ENCODE measurements at regions of chr21 and their contacts with region 1.

Region 1: GRCh38 chr21:45309069-45309986 is 21.6 kb upstream of the POFUT2 start:
- DNase-seq: peak; percentile 89
- H3K4me3 ChIP-seq: no peak overlapping the region
- H3K27ac ChIP-seq: peak overlapping the region; percentile 84
- H3K4me1 ChIP-seq: peaks cover 18% of the 10 kb centered on the region
- H3K27me3 ChIP-seq: no peaks in the 10 kb centered on the region
- CTCF ChIP-seq: peak; percentile 76 to 93
- POLR2A ChIP-seq: no peak

Region 2: DNA sequence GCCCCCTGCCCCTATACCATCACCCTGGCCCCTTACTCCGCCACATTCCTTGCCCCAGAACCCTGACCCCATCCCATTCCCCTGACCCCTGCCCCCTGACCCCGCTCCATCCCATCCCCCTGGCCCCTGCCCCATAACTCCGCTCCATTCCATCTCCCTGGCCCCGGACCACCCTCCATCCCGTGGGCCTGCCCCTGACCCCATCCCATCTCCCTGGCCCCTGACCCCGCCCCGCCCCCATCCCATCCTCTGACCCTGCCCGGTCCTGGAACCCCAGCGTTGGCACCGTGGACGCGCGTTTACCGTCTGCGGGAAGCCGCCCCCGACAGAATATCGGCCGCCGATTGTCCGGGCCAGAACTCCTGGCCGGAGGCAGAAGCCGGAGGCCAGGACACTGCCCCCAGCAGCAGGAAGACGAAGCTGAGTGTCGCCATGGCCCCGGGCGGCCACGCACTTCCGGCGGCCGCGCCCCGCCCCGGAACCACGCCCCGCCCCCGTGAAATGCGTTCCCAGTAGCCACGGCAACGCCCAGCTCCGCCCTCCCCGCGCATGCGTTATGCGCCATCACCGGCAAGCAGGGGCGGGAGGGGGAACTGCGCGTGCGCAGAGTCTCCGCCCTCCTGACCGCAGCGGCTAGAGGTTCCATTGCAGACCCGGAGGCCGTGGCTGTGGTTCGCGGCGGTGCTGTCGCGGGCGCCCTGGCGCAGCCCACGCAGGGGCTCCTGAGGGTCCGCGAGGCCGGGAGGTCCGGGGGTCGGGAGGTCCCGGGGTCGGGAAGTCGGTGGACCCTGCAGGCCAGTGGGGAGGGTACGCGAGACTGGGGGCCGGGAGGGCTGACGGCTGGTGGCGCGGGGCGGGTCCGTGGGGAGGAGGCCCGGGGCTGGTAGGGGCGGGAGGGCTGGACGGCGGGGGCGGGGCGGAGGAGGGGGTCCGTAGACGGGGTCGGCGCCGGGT is 21.6 kb before region 1 on chr21 and contains the start of gene POFUT2:
- CTCF ChIA-PET with region 1: interaction called, 48 read pairs
- POLR2A ChIA-PET with region 1: no interaction called
- dilution Hi-C with region 1: no loop called
- intact Hi-C with region 1: no loop called
- DNase-seq: peak; percentile 97
- H3K4me3 ChIP-seq: peak within 1 kb of the TSS; percentile 67 to 93 (median 79)
- H3K27ac ChIP-seq: peak within 1 kb of the TSS; percentile 56
- H3K4me1 ChIP-seq: peaks cover 20% of the 10 kb centered on the region
- H3K27me3 ChIP-seq: no peaks in the 10 kb centered on the region
- CTCF ChIP-seq: peak in 1 of 2 donors; percentile 2
- POLR2A ChIP-seq: peak; percentile 89
- total RNA-seq, gene POFUT2: 47.5 and 48.9 TPM in 2 replicates

Region 3: GRCh38 chr21:45319461-45320211 is 10.3 kb after region 1 on chr21:
- CTCF ChIA-PET with region 1: interaction called, 27 read pairs
- POLR2A ChIA-PET with region 1: interaction called, 3 read pairs
- dilution Hi-C with region 1: no loop called
- intact Hi-C with region 1: loop called (anchors 1 kb)
- DNase-seq: peak; percentile 85
- H3K4me3 ChIP-seq: no peak overlapping the region
- H3K27ac ChIP-seq: peak overlapping the region; percentile 90
- H3K4me1 ChIP-seq: peaks cover 39% of the 10 kb centered on the region
- H3K27me3 ChIP-seq: no peaks in the 10 kb centered on the region
- CTCF ChIP-seq: peak in 1 of 2 donors; percentile 33
- POLR2A ChIP-seq: peak; percentile 47

Region 4: GRCh38 chr21:45386721-45387371 is 77.5 kb after region 1 on chr21:
- CTCF ChIA-PET with region 1: interaction called, 11 read pairs
- POLR2A ChIA-PET with region 1: no interaction called
- dilution Hi-C with region 1: no loop called
- intact Hi-C with region 1: no loop called
- DNase-seq: peak; percentile 57
- H3K4me3 ChIP-seq: no peak overlapping the region
- H3K27ac ChIP-seq: no peak overlapping the region
- H3K4me1 ChIP-seq: no peaks in the 10 kb centered on the region
- H3K27me3 ChIP-seq: peaks cover 0 to 1% of the 10 kb centered on the region in 2 experiments
- CTCF ChIP-seq: peak in 1 of 2 donors; percentile 11
- POLR2A ChIP-seq: no peak

Region 5: DNA sequence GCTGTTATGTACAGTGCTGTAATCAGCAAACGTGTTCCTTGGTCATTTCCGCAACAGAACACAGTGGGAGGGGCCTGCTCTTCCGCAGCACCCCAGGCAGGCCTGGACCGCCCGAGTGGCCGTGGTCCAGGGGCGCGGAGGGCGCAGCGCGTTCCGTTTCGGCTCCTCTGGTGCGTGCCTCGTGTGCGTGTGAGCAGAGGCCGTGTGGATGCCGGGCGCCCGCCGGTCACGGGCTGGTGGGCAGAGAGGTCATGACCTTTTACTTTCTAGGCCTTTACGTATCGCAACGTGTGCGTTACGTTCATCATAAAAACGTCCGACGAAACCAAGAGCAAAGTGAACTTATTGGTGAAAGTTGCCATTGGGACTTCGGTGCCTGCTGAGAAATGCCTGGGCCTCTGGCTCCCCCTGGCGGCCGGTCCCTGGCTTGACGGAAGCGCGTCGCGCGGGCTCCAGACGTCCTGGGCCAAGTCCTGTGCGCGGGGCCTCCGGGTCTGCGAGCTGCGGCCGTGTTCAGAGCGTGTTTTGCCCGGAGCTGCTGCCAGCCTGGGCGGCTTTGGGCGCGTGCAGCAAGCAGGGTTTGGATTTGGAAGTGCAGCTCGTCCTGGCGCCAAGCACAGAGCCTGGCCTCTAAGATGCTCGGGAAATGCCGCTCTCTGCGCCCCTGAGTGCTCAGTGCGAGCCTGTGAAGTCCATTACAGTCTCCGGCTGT is 130.0 kb after region 1 on chr21:
- CTCF ChIA-PET with region 1: interaction called, 6 read pairs
- POLR2A ChIA-PET with region 1: no interaction called
- dilution Hi-C with region 1: no loop called
- intact Hi-C with region 1: loop called (anchors 1 kb)
- DNase-seq: peak; percentile 91
- H3K4me3 ChIP-seq: peak overlapping the region in 2 of 3 experiments; percentile 7 to 26
- H3K27ac ChIP-seq: peak overlapping the region; percentile 82
- H3K4me1 ChIP-seq: peaks cover 15% of the 10 kb centered on the region
- H3K27me3 ChIP-seq: no peaks in the 10 kb centered on the region
- CTCF ChIP-seq: peak; percentile 94 to 96
- POLR2A ChIP-seq: no peak